Activated naive CD4-positive, alpha-beta T cell treated with anti-CD3 and anti-CD28 coated beads for 36 hours (primary cell): ENCODE measurements at regions of chr7 and their contacts with region 1.

Region 1: GRCh38 chr7:95723592-95724180 is 48.7 kb upstream of the DYNC1I1 start:
- DNase-seq: peak; percentile 29
- H3K4me3 Mint-ChIP-seq: no peak overlapping the region
- H3K27ac Mint-ChIP-seq: no peak overlapping the region
- H3K4me1 Mint-ChIP-seq: no peaks in the 10 kb centered on the region
- H3K27me3 Mint-ChIP-seq: peaks cover 7% of the 10 kb centered on the region

Region 2: GRCh38 chr7:95794917-95795515 is 71.3 kb after region 1 on chr7:
- CTCF ChIA-PET with region 1: no interaction called
- intact Hi-C with region 1: loop called (anchors 2 kb)
- DNase-seq: no peak
- H3K4me3 Mint-ChIP-seq: no peak overlapping the region
- H3K27ac Mint-ChIP-seq: no peak overlapping the region
- H3K4me1 Mint-ChIP-seq: no peaks in the 10 kb centered on the region
- H3K27me3 Mint-ChIP-seq: peaks cover 2% of the 10 kb centered on the region

Region 3: DNA sequence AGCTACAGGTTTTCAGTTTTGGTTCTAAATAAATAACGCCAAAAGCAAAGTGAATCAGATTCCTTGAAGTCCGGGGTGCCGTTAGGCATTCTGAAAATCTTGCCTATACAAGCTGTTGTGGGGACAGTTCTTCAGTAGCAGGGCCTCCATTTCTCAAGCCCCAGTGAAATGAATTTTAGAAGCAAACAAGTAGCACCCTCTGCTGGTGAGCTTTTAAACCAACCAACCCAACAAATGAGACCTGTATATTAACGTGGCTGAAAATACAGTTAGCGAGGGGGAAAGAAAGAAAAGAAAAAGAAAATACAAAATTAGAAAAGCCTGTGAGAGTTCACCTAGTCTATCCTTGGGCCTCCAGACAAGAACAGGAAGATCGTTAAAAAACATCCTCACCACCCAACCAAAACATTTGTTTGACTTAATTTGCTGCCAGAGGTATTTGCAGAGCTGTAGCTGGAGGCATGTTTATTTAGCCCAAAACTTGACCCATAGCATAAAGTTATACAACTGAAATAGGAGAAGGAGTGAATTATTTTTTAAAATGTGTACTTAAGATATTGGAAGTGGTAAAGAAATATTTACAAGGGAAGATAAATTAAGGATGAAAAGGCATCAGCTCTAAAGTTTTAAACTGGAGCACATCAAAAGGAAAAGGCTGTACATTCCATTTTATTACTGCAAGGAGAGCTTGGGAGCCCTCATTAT is 147.5 kb after region 1 on chr7:
- CTCF ChIA-PET with region 1: no interaction called
- intact Hi-C with region 1: loop called (anchors 2 kb)
- DNase-seq: peak; percentile 23
- H3K4me3 Mint-ChIP-seq: no peak overlapping the region
- H3K27ac Mint-ChIP-seq: no peak overlapping the region
- H3K4me1 Mint-ChIP-seq: no peaks in the 10 kb centered on the region
- H3K27me3 Mint-ChIP-seq: peaks cover 5% of the 10 kb centered on the region